ENCODE measurements at regions of chr11 and their contacts with region 1.

Region 1: DNA sequence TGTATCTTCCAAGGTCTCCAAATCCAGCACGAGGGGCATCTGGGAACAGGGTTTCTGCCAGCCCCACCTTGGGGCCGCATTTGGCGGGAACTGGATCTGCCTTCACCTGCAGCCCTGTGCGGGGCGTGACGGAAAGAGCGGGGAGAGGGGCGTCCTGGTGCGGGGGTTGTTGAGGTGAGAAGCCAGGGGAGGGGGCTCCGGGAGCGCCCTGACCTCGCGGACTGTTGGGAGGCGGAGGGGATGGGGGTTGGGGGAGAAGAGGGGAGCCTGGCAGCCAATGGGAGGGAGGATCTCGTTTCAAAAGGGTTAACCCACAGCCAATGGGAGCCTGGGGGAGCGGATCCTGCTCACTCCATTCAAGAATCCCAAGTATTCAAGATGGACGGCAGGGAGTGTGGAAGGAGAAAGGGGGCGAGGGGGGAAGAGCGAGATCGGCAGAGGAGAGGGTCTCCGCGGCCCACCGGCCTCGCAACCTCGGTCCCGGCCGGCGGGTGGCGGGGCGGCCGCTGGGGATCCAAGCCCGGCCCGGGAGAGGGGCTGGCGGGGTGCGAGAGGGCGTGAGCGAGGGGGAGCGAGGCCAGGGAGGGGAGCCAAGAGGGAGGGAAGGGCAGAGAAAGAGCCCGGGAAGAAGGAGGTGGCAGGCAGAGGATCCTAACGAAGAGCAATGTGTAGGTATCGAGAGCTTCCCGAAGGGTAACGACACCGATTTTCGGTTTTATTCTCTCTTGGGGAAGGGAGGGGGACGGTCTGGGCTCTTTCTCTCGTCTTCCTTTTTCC is 11.5 kb downstream of the YPEL4 start:
- DNase-seq: peak; percentile 54 to 87
- ATAC-seq: peak; percentile 89 to 95 (median 92)
- H3K4me3 ChIP-seq: peak overlapping the region; percentile 82 to 97 (median 93)
- H3K27ac ChIP-seq: peak overlapping the region; percentile 66 to 91 (median 86)
- H3K4me1 ChIP-seq: peaks cover 8 to 38% (median 26%) of the 10 kb centered on the region in 9 donors
- H3K27me3 ChIP-seq: peaks cover 0 to 30% (median 0%) of the 10 kb centered on the region in 7 donors
- CTCF ChIP-seq: no peak

Region 2: GRCh38 chr11:57277845-57278709 is 360.1 kb before region 1 on chr11:
- intact Hi-C with region 1: no loop called
- DNase-seq: peak; percentile 68 to 81
- ATAC-seq: peak; percentile 57 to 80 (median 73)
- H3K4me3 ChIP-seq: peak overlapping the region in 3 of 10 donors; percentile 5 to 24 (median 8)
- H3K27ac ChIP-seq: peak overlapping the region in 9 of 10 donors; percentile 59 to 92 (median 82)
- H3K4me1 ChIP-seq: peaks cover 0 to 40% (median 26%) of the 10 kb centered on the region in 9 donors
- H3K27me3 ChIP-seq: no peaks in the 10 kb centered on the region
- CTCF ChIP-seq: peak; percentile 70 to 87 (median 84)

Region 3: GRCh38 chr11:57567515-57568329 is 70.5 kb before region 1 on chr11 and contains the start of gene UBE2L6:
- intact Hi-C with region 1: loop called in 8 of 10 experiments (anchors 2 to 5 kb)
- DNase-seq: peak; percentile 50 to 67
- ATAC-seq: peak; percentile 75 to 91 (median 85)
- H3K4me3 ChIP-seq: peak within 1 kb of the TSS; percentile 23 to 90 (median 80)
- H3K27ac ChIP-seq: peak within 1 kb of the TSS; percentile 51 to 94 (median 84)
- H3K4me1 ChIP-seq: peaks cover 0 to 52% (median 12%) of the 10 kb centered on the region in 9 donors
- H3K27me3 ChIP-seq: no peaks in the 10 kb centered on the region
- CTCF ChIP-seq: peak in 4 of 9 donors; percentile 78 to 89 (median 86)
- total RNA-seq, gene UBE2L6: 9.7 to 156 (median 17.7) TPM

Region 4: DNA sequence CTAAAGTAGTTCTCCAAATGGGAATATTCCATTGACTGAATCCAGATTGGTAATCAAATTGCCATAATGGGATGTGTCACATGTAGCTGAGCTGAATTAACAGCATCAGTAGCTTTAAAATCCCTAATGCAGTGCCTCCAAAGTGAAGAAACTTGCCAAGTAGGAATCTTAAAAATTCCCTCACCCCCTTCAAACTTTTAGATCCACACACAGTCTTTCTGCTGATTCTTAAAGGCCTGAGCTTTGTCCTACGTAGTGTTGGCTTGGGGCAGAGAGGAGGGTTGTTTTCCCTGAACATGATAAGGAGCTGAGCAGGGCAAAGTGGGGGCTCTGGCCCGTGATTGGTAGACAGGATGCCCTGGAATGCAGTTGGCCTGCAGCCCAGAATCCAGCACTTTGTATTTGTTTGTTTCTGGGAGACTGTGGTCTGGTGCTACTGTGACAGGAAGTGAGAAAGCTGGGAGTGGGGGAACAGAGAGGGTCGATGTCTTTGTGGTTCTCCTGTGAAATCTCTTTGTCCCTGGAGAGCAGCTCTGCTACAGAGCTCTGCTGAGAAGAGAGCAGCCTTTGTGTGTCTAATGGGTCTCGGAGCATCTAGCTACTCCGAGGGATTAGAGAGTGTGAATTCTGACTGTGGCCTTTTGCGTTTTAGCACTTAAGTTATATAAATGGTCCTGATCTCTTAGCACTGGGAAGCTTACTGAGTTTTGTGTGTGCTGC is 140.3 kb after region 1 on chr11:
- intact Hi-C with region 1: no loop called
- DNase-seq: peak; percentile 88 to 96
- ATAC-seq: peak; percentile 88 to 94 (median 92)
- H3K4me3 ChIP-seq: peak overlapping the region in 8 of 10 donors; percentile 5 to 41 (median 34)
- H3K27ac ChIP-seq: peak overlapping the region; percentile 74 to 95 (median 90)
- H3K4me1 ChIP-seq: peaks cover 48 to 100% (median 98%) of the 10 kb centered on the region in 9 donors
- H3K27me3 ChIP-seq: no peaks in the 10 kb centered on the region
- CTCF ChIP-seq: no peak

Region 5: GRCh38 chr11:57834852-57835251 is 196.7 kb after region 1 on chr11:
- intact Hi-C with region 1: no loop called
- DNase-seq: no peak
- ATAC-seq: no peak
- H3K4me3 ChIP-seq: no peak overlapping the region
- H3K27ac ChIP-seq: no peak overlapping the region
- H3K4me1 ChIP-seq: no peaks in the 10 kb centered on the region
- H3K27me3 ChIP-seq: peaks cover 0 to 8% (median 0%) of the 10 kb centered on the region in 7 donors
- CTCF ChIP-seq: no peak